ENCODE measurements at regions of chr1 and their contacts with region 1.

Region 1: GRCh38 chr1:109277434-109278204 is 5.3 kb downstream of the PSRC1 start:
- DNase-seq: peak; percentile 95
- H3K4me3 ChIP-seq: no peak overlapping the region
- H3K27ac ChIP-seq: peak overlapping the region; percentile 32 to 60 (median 49)
- H3K4me1 ChIP-seq: peaks cover 19 to 66% (median 56%) of the 10 kb centered on the region in 4 donors
- H3K27me3 ChIP-seq: no peaks in the 10 kb centered on the region
- CTCF ChIP-seq: peak; percentile 88 to 94 (median 91)
- EP300 ChIP-seq: no peak
- POLR2A ChIP-seq: no peak

Region 2: GRCh38 chr1:109397538-109398342 is 120.1 kb after region 1 on chr1 and contains the start of gene SORT1:
- intact Hi-C with region 1: loop called (anchors 2 kb)
- DNase-seq: peak; percentile 97
- H3K4me3 ChIP-seq: peak within 1 kb of the TSS; percentile 67 to 92 (median 78)
- H3K27ac ChIP-seq: peak within 1 kb of the TSS; percentile 82 to 95 (median 90)
- H3K4me1 ChIP-seq: peaks cover 43 to 57% (median 53%) of the 10 kb centered on the region in 4 donors
- H3K27me3 ChIP-seq: no peaks in the 10 kb centered on the region
- CTCF ChIP-seq: no peak
- EP300 ChIP-seq: no peak
- POLR2A ChIP-seq: peak; percentile 11
- total RNA-seq, gene SORT1: 92.6 to 136 (median 134) TPM

Measured in esophagus muscularis mucosa (tissue), 4 donors.